Stomach (tissue), 19 donors: ENCODE measurements at regions of chr1 and their contacts with region 1.

Region 1: DNA sequence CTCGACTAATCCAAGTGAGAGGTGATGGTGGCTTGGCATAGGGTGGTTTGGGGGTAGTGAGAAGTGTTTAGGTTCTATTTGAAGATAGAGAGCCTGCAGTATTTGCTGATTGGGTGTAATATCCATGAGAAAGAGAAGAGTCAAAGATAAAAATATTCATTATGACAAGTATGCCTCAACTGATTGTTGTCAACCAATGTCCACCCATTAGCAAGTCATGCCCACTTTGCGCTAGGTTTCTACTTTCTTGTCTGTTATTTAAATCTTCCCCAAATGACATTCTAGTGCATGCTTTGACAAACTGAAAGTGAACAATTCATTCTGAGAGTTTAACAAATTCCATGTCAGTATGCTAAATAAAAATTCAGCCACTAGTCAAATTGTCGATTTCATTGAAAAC is 3.8 kb upstream of the XCL1 start:
- DNase-seq: no peak
- H3K4me3 ChIP-seq: no peak overlapping the region
- H3K27ac ChIP-seq: no peak overlapping the region
- H3K4me1 ChIP-seq: no peaks in the 10 kb centered on the region
- H3K27me3 ChIP-seq: no peaks in the 10 kb centered on the region
- CTCF ChIP-seq: no peak
- EP300 ChIP-seq: no peak
- POLR2A ChIP-seq: no peak

Region 2: DNA sequence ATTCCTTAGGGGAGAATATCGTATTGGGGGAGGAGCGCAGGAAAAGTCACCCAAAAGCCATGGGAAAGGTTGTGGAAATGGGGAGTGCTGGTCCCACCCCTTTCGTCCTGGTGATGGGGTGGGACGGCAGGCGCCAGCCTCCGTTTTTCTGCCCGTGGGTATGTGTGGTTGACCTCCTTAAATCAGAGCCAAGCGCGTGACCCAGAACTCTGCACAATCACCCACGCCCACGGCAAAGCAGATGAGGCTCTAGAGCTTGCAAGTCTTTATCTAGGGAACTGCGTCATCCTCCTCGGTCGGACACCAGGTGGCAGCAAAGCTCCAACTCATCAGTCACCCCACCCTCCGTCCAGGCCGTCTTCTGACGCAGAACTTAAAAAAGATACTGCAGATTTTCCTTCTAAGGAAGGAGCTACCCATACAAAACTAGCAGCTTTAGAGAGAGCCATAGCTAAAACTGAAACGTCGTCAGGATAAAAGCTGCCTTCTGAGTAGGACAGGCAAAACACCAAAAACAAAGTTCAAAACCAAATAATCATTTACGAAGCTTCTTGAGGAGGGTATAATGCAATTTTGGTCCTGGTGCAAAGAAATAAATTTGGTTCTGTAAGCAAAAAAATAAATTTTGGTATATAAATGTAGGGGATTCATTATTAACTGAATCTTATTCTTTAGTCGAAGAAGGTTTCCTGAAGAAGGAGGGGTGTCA is 229.9 kb before region 1 on chr1:
- intact Hi-C with region 1: loop called (anchors 10 kb)
- DNase-seq: peak; percentile 87 to 96
- H3K4me3 ChIP-seq: peak overlapping the region; percentile 9 to 25 (median 17)
- H3K27ac ChIP-seq: peak overlapping the region in 3 of 5 donors; percentile 41 to 77 (median 44)
- H3K4me1 ChIP-seq: peaks cover 4 to 19% (median 12%) of the 10 kb centered on the region in 4 donors
- H3K27me3 ChIP-seq: no peaks in the 10 kb centered on the region
- CTCF ChIP-seq: peak in 5 of 7 experiments; percentile 60 to 83 (median 80)
- EP300 ChIP-seq: no peak
- POLR2A ChIP-seq: no peak

Region 3: GRCh38 chr1:168439456-168440375 is 132.9 kb before region 1 on chr1:
- intact Hi-C with region 1: loop called (anchors 5 kb)
- DNase-seq: peak; percentile 75 to 94
- H3K4me3 ChIP-seq: peak overlapping the region in 3 of 4 donors; percentile 8 to 31 (median 11)
- H3K27ac ChIP-seq: no peak overlapping the region
- H3K4me1 ChIP-seq: peaks cover 0 to 12% (median 6%) of the 10 kb centered on the region in 4 donors
- H3K27me3 ChIP-seq: no peaks in the 10 kb centered on the region
- CTCF ChIP-seq: peak in 5 of 7 experiments; percentile 58 to 79 (median 74)
- EP300 ChIP-seq: no peak
- POLR2A ChIP-seq: no peak

Region 4: DNA sequence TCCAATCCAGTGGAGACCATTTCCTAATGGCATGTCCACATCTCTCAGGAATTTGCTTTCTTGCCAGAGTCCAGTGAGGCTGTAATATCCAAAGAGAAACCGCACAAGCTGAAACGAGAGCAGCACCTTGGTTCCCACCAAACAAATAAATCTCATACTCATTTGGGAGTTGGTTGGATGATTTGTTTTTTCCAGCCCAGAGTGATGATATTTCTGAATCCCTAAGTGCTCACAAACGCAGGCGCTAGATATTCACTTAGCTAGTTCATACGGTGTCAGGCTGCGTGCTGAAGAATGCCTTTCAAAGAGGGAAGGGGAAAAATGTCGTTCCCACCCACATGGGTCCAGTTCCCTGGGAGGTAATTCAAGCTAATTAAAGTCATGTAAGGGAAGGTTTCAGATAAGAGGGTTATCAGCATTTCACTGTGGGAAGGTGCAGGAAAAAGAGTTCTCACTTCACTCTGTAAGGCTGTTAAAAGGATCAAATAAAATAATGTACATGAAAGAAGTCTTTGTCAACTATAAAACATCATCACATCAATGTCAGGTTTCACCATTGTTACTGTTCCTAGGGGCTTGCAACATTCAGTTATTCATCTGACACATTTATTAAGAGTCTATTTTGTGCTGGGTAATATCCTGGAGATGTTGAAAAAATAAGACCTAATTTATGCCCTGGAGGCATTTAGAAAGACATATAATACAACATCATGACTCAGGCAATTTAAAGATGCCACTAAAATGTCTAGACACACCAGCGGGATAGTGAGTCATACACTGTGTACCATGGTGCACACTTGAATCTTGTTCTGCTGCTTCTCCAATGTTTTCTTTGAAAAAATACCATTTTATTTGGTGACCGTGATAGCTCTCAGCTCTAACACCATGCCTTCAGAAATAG is 137.0 kb after region 1 on chr1:
- intact Hi-C with region 1: no loop called
- DNase-seq: peak in 1 of 2 donors; percentile 75
- H3K4me3 ChIP-seq: no peak overlapping the region
- H3K27ac ChIP-seq: peak overlapping the region in 4 of 5 donors; percentile 51 to 74 (median 61)
- H3K4me1 ChIP-seq: peaks cover 10 to 34% (median 24%) of the 10 kb centered on the region in 4 donors
- H3K27me3 ChIP-seq: no peaks in the 10 kb centered on the region
- CTCF ChIP-seq: no peak
- EP300 ChIP-seq: no peak
- POLR2A ChIP-seq: no peak